WTC11 (cell line): ENCODE measurements at regions of chr9 and their contacts with region 1.

Region 1: GRCh38 chr9:108282872-108283271 is 572.9 kb downstream of the ACTL7B start:
- DNase-seq: no peak
- ATAC-seq: no peak
- H3K4me3 Mint-ChIP-seq: no peak overlapping the region
- H3K27ac Mint-ChIP-seq: no peak overlapping the region
- H3K4me1 Mint-ChIP-seq: no peaks in the 10 kb centered on the region
- H3K27me3 Mint-ChIP-seq: no peaks in the 10 kb centered on the region
- CTCF ChIP-seq: 0 out of 2 replicates have a peak, but pooled peaks have one; percentile 21

Region 2: GRCh38 chr9:108272349-108272899 is 10.4 kb before region 1 on chr9:
- CTCF ChIA-PET with region 1: interaction called, 16 read pairs
- POLR2A ChIA-PET with region 1: no interaction called
- DNase-seq: peak; percentile 56
- ATAC-seq: peak; percentile 75
- H3K4me3 Mint-ChIP-seq: peak overlapping the region; percentile 34; the same call in 1 of the 2 replicates
- H3K27ac Mint-ChIP-seq: peak overlapping the region; percentile 84
- H3K4me1 Mint-ChIP-seq: peaks cover 27% of the 10 kb centered on the region
- H3K27me3 Mint-ChIP-seq: no peaks in the 10 kb centered on the region; the same call in 1 of the 2 replicates
- CTCF ChIP-seq: no peak